CD8-positive, alpha-beta T cell (primary cell): ENCODE measurements at regions of chr1 and their contacts with region 1.

Region 1: DNA sequence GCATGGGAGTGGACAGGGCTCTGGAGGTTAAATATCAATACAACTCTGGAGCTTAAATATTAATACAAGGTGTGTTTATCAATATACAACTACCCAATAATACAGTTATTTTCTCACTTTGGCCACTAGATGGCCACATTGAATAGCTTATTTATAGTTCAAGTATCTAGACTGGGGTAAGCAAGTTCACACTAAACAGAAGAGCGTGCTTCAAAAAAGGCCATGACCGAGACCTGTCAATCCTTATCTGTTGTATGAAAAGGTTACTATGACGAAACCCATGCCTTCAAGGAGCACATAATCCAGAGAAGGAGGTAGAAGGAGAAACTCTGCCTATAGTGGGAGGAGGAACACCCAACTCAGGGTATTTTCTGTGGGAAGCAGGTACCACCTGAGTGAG is 29.1 kb downstream of the CHML start:
- DNase-seq: peak in 3 of 9 experiments; percentile 9 to 76 (median 65)
- ATAC-seq: peak; percentile 90
- H3K4me3 ChIP-seq: no peak overlapping the region
- H3K4me3 Mint-ChIP-seq: no peak overlapping the region
- H3K27ac ChIP-seq: no peak overlapping the region
- H3K27ac Mint-ChIP-seq: no peak overlapping the region
- H3K4me1 ChIP-seq: no peaks in the 10 kb centered on the region
- H3K4me1 Mint-ChIP-seq: no peaks in the 10 kb centered on the region
- H3K27me3 ChIP-seq: no peaks in the 10 kb centered on the region
- H3K27me3 Mint-ChIP-seq: no peaks in the 10 kb centered on the region
- CTCF ChIP-seq: peak; percentile 84

Region 2: DNA sequence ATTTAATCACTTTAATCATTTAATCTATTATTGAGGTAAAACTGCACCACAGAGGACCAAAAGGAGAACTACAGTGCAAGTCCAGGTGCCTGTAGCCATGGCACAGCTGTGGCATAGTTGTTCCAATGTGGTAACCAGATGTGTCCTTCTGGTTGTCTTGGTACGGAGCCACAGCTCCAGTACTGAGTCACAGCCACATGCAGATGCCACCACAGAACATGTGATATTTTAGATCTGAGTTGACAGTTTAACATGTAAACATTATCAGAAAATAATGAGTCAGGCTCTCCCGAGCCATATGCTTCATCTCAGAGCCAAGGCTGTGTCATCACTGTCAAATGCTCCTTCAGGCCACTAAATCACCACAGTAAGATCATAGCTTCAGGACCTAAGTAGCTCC is 197.7 kb before region 1 on chr1:
- CTCF ChIA-PET with region 1: no interaction called
- POLR2A ChIA-PET with region 1: no interaction called
- intact Hi-C with region 1: no loop called
- DNase-seq: no peak
- ATAC-seq: no peak
- H3K4me3 ChIP-seq: no peak overlapping the region
- H3K4me3 Mint-ChIP-seq: no peak overlapping the region
- H3K27ac ChIP-seq: no peak overlapping the region
- H3K27ac Mint-ChIP-seq: no peak overlapping the region
- H3K4me1 ChIP-seq: no peaks in the 10 kb centered on the region
- H3K4me1 Mint-ChIP-seq: no peaks in the 10 kb centered on the region
- H3K27me3 ChIP-seq: no peaks in the 10 kb centered on the region
- H3K27me3 Mint-ChIP-seq: peaks cover 21% of the 10 kb centered on the region
- CTCF ChIP-seq: no peak

Region 3: DNA sequence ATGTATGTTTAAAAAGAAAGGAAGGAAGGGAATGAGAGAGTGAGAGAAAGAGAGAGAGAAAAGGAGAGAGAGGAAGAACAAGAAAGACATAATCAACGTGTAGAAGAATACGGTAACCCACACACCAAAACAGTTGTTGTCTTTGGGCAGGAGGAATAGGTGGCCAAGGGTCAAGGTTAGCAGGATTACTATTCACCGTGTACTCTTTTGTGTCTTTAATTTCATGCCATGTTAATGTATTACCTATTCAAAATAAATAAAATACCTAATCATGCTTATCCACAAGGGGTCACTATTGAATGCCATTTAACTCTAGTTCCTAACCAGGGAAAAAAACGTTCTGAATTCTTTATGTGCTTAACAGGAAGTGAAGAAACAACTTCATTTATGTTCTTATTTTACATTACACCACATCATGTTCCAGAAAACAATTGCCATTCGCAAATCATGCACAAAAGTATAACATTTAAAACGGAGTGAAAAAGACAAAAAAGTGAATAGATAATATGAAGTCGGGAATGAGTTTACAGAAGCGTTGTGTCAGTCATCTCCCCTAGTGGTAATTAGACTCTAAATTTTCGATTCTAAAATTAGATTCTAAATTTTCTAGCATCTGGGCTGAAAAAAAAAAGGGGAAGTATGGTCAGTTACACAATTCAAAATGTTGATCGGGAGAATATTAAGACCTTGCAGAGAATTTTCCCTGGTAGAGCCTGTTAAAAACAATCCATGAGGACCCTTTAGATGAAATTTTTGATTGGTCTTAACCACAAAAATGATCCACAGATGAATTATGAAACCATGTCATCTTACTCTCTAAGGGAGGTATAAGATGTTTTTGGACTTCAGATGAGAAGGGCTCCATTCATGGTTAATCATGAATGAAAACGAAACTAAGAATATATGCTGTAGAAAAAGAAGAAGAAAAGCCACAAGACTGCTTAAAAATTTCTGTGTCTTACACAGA is 79.6 kb before region 1 on chr1:
- CTCF ChIA-PET with region 1: interaction called, 5 read pairs
- POLR2A ChIA-PET with region 1: no interaction called
- intact Hi-C with region 1: loop called (anchors 1 to 5 kb)
- DNase-seq: peak in 2 of 9 experiments; percentile 67 to 79
- ATAC-seq: peak; percentile 88
- H3K4me3 ChIP-seq: peak overlapping the region; percentile 52 to 63
- H3K4me3 Mint-ChIP-seq: peak overlapping the region; percentile 93
- H3K27ac ChIP-seq: peak overlapping the region; percentile 4 to 11
- H3K27ac Mint-ChIP-seq: peak overlapping the region; percentile 77
- H3K4me1 ChIP-seq: peaks cover 4% of the 10 kb centered on the region
- H3K4me1 Mint-ChIP-seq: peaks cover 14% of the 10 kb centered on the region
- H3K27me3 ChIP-seq: peaks cover 0 to 2% of the 10 kb centered on the region in 2 experiments
- H3K27me3 Mint-ChIP-seq: no peaks in the 10 kb centered on the region
- CTCF ChIP-seq: peak; percentile 77

Region 4: DNA sequence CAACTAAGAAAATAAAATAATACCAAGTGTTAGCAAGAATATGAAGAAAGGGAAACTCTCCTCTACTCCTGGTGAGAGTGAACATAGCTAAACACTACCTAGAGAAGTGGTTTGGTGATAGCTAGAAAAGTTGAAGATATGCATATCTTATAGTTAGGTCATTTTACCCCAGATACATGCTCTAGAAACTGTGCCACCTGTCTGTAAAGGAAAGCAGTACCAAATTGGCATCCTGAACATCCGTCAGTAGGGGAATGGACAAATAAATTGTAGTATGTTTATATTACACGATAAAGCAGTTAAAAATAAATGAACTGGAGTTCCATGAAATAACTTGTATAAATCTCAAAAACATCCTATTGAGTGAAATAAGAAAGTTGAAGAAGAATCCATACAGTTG is 145.5 kb after region 1 on chr1:
- CTCF ChIA-PET with region 1: interaction called, 3 read pairs
- POLR2A ChIA-PET with region 1: no interaction called
- intact Hi-C with region 1: loop called in 1 of 2 experiments (anchors 5 kb)
- DNase-seq: peak in 1 of 9 experiments; percentile 3
- ATAC-seq: no peak
- H3K4me3 ChIP-seq: no peak overlapping the region
- H3K4me3 Mint-ChIP-seq: no peak overlapping the region
- H3K27ac ChIP-seq: no peak overlapping the region
- H3K27ac Mint-ChIP-seq: no peak overlapping the region
- H3K4me1 ChIP-seq: no peaks in the 10 kb centered on the region
- H3K4me1 Mint-ChIP-seq: no peaks in the 10 kb centered on the region
- H3K27me3 ChIP-seq: no peaks in the 10 kb centered on the region
- H3K27me3 Mint-ChIP-seq: no peaks in the 10 kb centered on the region
- CTCF ChIP-seq: no peak

Region 5: GRCh38 chr1:241834733-241835377 is 223.8 kb after region 1 on chr1:
- CTCF ChIA-PET with region 1: interaction called, 39 read pairs
- POLR2A ChIA-PET with region 1: no interaction called
- intact Hi-C with region 1: loop called (anchors 1 to 2 kb)
- DNase-seq: peak in 1 of 9 experiments; percentile 23
- ATAC-seq: no peak
- H3K4me3 ChIP-seq: no peak overlapping the region
- H3K4me3 Mint-ChIP-seq: no peak overlapping the region
- H3K27ac ChIP-seq: no peak overlapping the region
- H3K27ac Mint-ChIP-seq: no peak overlapping the region
- H3K4me1 ChIP-seq: no peaks in the 10 kb centered on the region
- H3K4me1 Mint-ChIP-seq: no peaks in the 10 kb centered on the region
- H3K27me3 ChIP-seq: no peaks in the 10 kb centered on the region
- H3K27me3 Mint-ChIP-seq: peaks cover 5% of the 10 kb centered on the region
- CTCF ChIP-seq: peak; percentile 45

Region 6: DNA sequence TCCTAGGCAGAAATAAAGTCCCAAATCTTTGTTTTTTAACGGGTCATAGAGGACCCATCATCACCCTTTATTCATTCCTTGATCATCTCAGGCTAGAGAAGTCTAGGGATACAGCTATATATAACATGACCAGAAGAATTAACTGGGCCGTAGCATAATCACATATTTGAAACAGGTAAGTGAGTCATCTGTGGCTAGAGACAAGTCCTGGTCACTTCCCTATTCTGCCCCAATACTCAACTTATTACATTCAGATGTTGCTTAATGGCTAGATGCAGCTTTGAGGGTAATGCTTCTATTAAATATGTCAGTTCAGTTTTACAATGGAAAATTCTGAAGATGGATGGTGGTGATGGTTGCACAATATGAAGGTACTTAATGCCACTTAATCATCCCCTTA is 283.9 kb after region 1 on chr1:
- CTCF ChIA-PET with region 1: interaction called, 9 read pairs
- POLR2A ChIA-PET with region 1: no interaction called
- intact Hi-C with region 1: loop called (anchors 1 to 5 kb)
- DNase-seq: no peak
- ATAC-seq: no peak
- H3K4me3 ChIP-seq: no peak overlapping the region
- H3K4me3 Mint-ChIP-seq: no peak overlapping the region
- H3K27ac ChIP-seq: no peak overlapping the region
- H3K27ac Mint-ChIP-seq: no peak overlapping the region
- H3K4me1 ChIP-seq: no peaks in the 10 kb centered on the region
- H3K4me1 Mint-ChIP-seq: no peaks in the 10 kb centered on the region
- H3K27me3 ChIP-seq: no peaks in the 10 kb centered on the region
- H3K27me3 Mint-ChIP-seq: no peaks in the 10 kb centered on the region
- CTCF ChIP-seq: no peak

Region 7: GRCh38 chr1:242017584-242018233 is 406.6 kb after region 1 on chr1:
- CTCF ChIA-PET with region 1: interaction called, 4 read pairs
- POLR2A ChIA-PET with region 1: no interaction called
- intact Hi-C with region 1: loop called (anchors 1 to 2 kb)
- DNase-seq: peak in 5 of 9 experiments; percentile 2 to 52 (median 32)
- ATAC-seq: no peak
- H3K4me3 ChIP-seq: no peak overlapping the region
- H3K4me3 Mint-ChIP-seq: no peak overlapping the region
- H3K27ac ChIP-seq: no peak overlapping the region
- H3K27ac Mint-ChIP-seq: no peak overlapping the region
- H3K4me1 ChIP-seq: no peaks in the 10 kb centered on the region
- H3K4me1 Mint-ChIP-seq: no peaks in the 10 kb centered on the region
- H3K27me3 ChIP-seq: peaks cover 0 to 2% of the 10 kb centered on the region in 2 experiments
- H3K27me3 Mint-ChIP-seq: no peaks in the 10 kb centered on the region
- CTCF ChIP-seq: peak; percentile 37